Dendritic cell treated with granulocyte-macrophage colony-stimulating factor and Interleukin-4, amounts not matched to agents 40 ng/mL and 50 ng/mL, for 4 days (primary cell): ENCODE measurements at regions of chr11 and their contacts with region 1.

Region 1: GRCh38 chr11:75706260-75706729 is 11.3 kb upstream of the MOGAT2 start:
- H3K4me3 Mint-ChIP-seq: no peak overlapping the region
- H3K27ac Mint-ChIP-seq: no peak overlapping the region
- H3K4me1 Mint-ChIP-seq: peaks cover 12% of the 10 kb centered on the region
- H3K27me3 Mint-ChIP-seq: peaks cover 13% of the 10 kb centered on the region

Region 2: DNA sequence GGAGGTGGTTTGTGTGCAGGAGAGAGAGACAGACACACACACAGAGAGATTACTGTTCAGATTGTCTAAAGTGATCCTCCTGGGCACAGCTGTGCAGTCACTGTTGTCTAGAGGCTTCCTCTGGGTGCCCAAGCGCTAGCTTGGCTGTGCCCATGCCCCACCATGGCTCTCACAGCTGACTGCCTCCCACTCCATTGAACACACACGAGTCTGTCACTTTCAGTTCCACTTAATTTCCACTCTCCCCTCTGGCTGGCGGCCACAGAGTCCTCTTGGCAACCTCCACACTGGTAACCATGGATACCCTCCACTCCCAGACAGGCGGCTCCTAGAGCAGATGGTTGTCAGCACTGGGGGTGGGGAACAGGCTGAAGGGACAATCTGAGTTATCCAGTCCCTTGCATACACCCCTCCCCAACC is 66.5 kb before region 1 on chr11:
- intact Hi-C with region 1: no loop called
- H3K4me3 Mint-ChIP-seq: no peak overlapping the region
- H3K27ac Mint-ChIP-seq: peak overlapping the region; percentile 67
- H3K4me1 Mint-ChIP-seq: peaks cover 27% of the 10 kb centered on the region
- H3K27me3 Mint-ChIP-seq: peaks cover 22% of the 10 kb centered on the region

Region 3: GRCh38 chr11:75718419-75719339 is 12.4 kb after region 1 on chr11:
- intact Hi-C with region 1: no loop called
- H3K4me3 Mint-ChIP-seq: no peak overlapping the region
- H3K27ac Mint-ChIP-seq: no peak overlapping the region
- H3K4me1 Mint-ChIP-seq: peaks cover 15% of the 10 kb centered on the region
- H3K27me3 Mint-ChIP-seq: peaks cover 24% of the 10 kb centered on the region

Region 4: DNA sequence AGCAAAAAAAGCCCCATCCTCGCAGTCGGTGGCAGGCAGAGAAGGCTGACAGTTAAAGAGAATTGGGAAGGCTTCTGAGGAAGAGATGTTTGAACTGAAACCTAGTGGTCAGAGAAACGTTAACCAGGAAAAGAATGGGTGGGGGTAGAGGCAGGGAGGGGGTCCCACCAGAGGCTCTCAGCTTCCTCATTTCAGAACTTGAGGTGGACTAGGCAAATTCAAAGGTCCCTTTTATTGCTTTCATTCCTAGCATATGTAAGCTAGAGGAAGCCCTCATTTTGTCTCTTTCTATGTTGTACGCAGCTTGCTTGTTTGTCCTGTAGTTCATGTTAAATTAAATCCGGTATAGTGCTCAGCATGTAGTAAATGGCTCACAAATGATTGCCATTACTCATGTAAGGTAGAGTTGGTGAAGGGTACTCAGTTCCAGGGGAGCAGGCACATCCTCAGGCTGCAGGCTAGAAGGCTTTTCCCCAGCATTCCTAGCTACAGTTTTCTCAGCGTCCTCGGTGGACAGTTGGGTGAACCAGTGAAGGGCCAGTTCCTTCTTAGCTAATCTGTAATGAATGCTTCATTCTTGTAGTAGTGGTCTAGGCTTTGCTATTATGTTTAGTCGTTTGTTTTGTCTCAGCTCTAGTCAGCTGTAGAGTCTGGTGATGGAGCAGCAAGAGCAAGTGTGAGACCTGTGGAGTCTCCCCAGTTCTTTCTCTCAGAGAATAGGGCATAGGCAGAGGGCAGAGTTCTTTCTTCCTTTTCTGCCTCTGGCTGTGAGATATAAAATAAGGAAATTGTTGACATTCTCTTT is 167.3 kb after region 1 on chr11:
- intact Hi-C with region 1: loop called (anchors 5 kb)
- H3K4me3 Mint-ChIP-seq: peak overlapping the region; percentile 70
- H3K27ac Mint-ChIP-seq: peak overlapping the region; percentile 93
- H3K4me1 Mint-ChIP-seq: peaks cover 70% of the 10 kb centered on the region
- H3K27me3 Mint-ChIP-seq: no peaks in the 10 kb centered on the region